ENCODE measurements at regions of chr6 and their contacts with region 1.

Region 1: GRCh38 chr6:109073344-109074132 is 21.1 kb downstream of the SESN1 start:
- DNase-seq: no peak
- ATAC-seq: peak; percentile 61; the same call in 2 of the 3 replicates
- H3K4me3 ChIP-seq: no peak overlapping the region
- H3K27ac ChIP-seq: no peak overlapping the region
- H3K4me1 ChIP-seq: no peaks in the 10 kb centered on the region
- H3K27me3 ChIP-seq: 0 out of 4 replicates have a peak, but pooled peaks cover 0 to 1% of the 10 kb centered on the region in 2 experiments
- CTCF ChIP-seq: peak; percentile 48 to 75 (median 60)
- EP300 ChIP-seq: no peak
- POLR2A ChIP-seq: no peak
- RAD21 ChIP-seq: peak; percentile 86

Region 2: GRCh38 chr6:108541838-108542759 is 531.4 kb before region 1 on chr6:
- CTCF ChIA-PET with region 1: interaction called, 107 read pairs
- POLR2A ChIA-PET with region 1: no interaction called
- RAD21 ChIA-PET with region 1: interaction called, 49 read pairs
- SMC1A ChIA-PET with region 1: interaction called, 61 read pairs
- in situ Hi-C with region 1: loop called (anchors 5 kb)
- intact Hi-C with region 1: loop called (anchors 1 kb)
- DNase-seq: no peak
- ATAC-seq: peak; percentile 85
- H3K4me3 ChIP-seq: no peak overlapping the region
- H3K27ac ChIP-seq: no peak overlapping the region
- H3K4me1 ChIP-seq: no peaks in the 10 kb centered on the region
- H3K27me3 ChIP-seq: peaks cover 0 to 1% of the 10 kb centered on the region in 2 experiments; a peak in 2 of 4 replicates
- CTCF ChIP-seq: peak; percentile 76 to 91 (median 80)
- EP300 ChIP-seq: no peak
- POLR2A ChIP-seq: no peak
- RAD21 ChIP-seq: peak; percentile 95

Region 3: DNA sequence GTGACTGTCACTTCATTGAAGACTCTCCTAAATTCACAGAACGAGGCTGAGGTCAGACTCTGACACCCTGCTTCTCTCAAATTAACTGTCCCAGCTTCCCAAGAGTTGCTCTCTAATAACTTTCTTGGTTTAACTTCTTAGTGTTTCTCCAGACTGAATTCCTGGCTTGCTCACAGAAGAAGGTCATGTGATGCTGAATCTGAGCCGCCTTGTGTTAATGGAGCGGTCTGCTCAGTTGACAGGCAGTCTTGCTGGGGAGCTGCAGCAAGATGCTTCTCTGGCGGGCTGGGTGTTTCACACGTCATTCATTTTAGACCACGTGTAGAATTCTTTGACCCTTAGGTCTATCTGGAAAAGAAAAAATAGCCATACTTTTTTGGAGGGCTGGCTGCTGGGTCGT is 405.5 kb before region 1 on chr6:
- CTCF ChIA-PET with region 1: no interaction called
- POLR2A ChIA-PET with region 1: no interaction called
- RAD21 ChIA-PET with region 1: no interaction called
- SMC1A ChIA-PET with region 1: no interaction called
- in situ Hi-C with region 1: no loop called
- intact Hi-C with region 1: no loop called
- DNase-seq: no peak
- ATAC-seq: no peak
- H3K4me3 ChIP-seq: no peak overlapping the region
- H3K27ac ChIP-seq: no peak overlapping the region
- H3K4me1 ChIP-seq: peaks cover 10% of the 10 kb centered on the region
- H3K27me3 ChIP-seq: no peaks in the 10 kb centered on the region
- CTCF ChIP-seq: no peak
- EP300 ChIP-seq: no peak
- POLR2A ChIP-seq: no peak
- RAD21 ChIP-seq: no peak

Region 4: GRCh38 chr6:108782179-108783041 is 291.1 kb before region 1 on chr6:
- CTCF ChIA-PET with region 1: interaction called, 9 read pairs
- POLR2A ChIA-PET with region 1: no interaction called
- RAD21 ChIA-PET with region 1: no interaction called
- SMC1A ChIA-PET with region 1: interaction called, 4 read pairs
- in situ Hi-C with region 1: no loop called
- intact Hi-C with region 1: loop called (anchors 2 kb)
- DNase-seq: no peak
- ATAC-seq: peak; percentile 98
- H3K4me3 ChIP-seq: peak overlapping the region; percentile 42; the same call in 1 of the 2 replicates
- H3K27ac ChIP-seq: no peak overlapping the region
- H3K4me1 ChIP-seq: no peaks in the 10 kb centered on the region
- H3K27me3 ChIP-seq: peaks cover 3 to 22% of the 10 kb centered on the region in 2 experiments; a peak in 3 of 4 replicates
- CTCF ChIP-seq: peak; percentile 81 to 93 (median 86)
- EP300 ChIP-seq: no peak
- POLR2A ChIP-seq: no peak
- RAD21 ChIP-seq: peak; percentile 78

Region 5: DNA sequence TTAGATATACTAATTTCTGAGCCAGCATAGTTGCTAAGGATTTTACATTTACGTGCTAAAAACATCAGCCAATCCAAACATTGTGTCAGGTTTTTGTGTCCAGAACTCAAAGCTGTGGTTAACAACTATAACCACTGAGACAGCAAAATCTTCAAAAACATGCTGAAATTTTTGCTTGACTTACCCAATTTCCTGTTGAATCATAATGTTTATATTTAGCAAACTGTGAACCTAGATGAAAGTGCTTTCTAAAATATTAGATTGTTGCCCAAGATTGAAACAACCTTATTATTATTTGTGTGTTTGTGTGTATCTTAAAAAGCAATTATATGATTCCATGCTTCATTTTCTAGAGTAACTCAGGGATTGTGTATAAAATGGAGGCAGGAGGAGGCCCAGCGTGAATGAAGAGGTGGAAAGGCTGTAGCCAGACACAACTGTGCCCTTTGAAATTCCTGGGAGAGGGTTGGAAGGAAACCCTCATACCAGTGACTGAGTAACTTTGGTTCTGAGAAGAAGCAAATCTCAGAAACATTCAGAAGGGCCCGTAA is 177.4 kb before region 1 on chr6:
- CTCF ChIA-PET with region 1: interaction called, 15 read pairs
- POLR2A ChIA-PET with region 1: no interaction called
- RAD21 ChIA-PET with region 1: interaction called, 4 read pairs
- SMC1A ChIA-PET with region 1: interaction called, 3 read pairs
- in situ Hi-C with region 1: no loop called
- intact Hi-C with region 1: no loop called
- DNase-seq: no peak
- ATAC-seq: no peak
- H3K4me3 ChIP-seq: no peak overlapping the region
- H3K27ac ChIP-seq: no peak overlapping the region
- H3K4me1 ChIP-seq: no peaks in the 10 kb centered on the region
- H3K27me3 ChIP-seq: peaks cover 3 to 4% of the 10 kb centered on the region in 2 experiments; a peak in 2 of 4 replicates
- CTCF ChIP-seq: no peak
- EP300 ChIP-seq: peak in 1 of 2 experiments; percentile 34; a peak in 1 of 4 replicates
- POLR2A ChIP-seq: no peak
- RAD21 ChIP-seq: no peak

Region 6: DNA sequence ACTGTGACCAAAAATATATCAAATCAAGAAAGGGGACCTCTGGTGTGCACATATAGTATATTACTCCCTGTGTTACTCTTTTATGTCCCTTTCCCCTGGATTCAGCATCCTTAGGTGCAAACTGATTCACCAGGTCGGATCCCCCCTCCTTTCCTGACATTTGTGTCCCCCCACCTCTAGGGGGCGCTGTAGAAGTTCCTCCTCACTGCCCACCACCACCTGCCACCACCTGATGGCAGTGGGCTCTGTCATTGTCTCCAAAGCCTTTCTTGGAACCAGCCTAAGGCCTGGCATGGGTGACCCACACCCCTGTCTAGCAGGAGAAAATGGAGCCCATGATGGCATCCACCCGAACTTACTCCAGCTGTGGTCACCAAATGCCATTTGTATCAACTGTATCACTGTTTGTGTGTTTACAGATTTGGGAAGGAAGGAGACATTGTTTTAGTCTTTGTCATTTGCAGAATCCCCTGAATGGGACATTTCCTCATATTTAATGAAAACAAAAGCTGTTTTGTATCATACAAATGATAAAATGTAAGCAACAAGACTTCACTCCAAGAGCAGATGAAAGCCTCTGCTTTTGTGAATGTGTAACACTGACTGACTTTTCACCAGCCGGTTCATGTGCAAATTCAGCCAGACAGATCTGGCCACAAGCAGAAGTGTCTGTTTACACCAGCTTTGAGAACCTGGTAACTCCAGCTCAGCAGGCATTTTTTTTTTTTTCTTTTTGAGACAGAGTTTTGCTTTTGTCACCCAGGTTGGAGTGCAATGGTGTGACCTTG is 159.1 kb before region 1 on chr6:
- CTCF ChIA-PET with region 1: interaction called, 73 read pairs
- POLR2A ChIA-PET with region 1: no interaction called
- RAD21 ChIA-PET with region 1: no interaction called
- SMC1A ChIA-PET with region 1: interaction called, 3 read pairs
- in situ Hi-C with region 1: no loop called
- intact Hi-C with region 1: loop called (anchors 5 kb)
- DNase-seq: no peak
- ATAC-seq: peak; percentile 65
- H3K4me3 ChIP-seq: no peak overlapping the region
- H3K27ac ChIP-seq: no peak overlapping the region
- H3K4me1 ChIP-seq: no peaks in the 10 kb centered on the region
- H3K27me3 ChIP-seq: no peaks in the 10 kb centered on the region; a peak in 2 of 4 replicates
- CTCF ChIP-seq: peak; percentile 59 to 65 (median 65)
- EP300 ChIP-seq: no peak
- POLR2A ChIP-seq: no peak
- RAD21 ChIP-seq: 0 out of 2 replicates have a peak, but pooled peaks have one; percentile 8

Region 7: GRCh38 chr6:109059571-109060021 is 13.9 kb before region 1 on chr6:
- CTCF ChIA-PET with region 1: interaction called, 13 read pairs
- POLR2A ChIA-PET with region 1: no interaction called
- RAD21 ChIA-PET with region 1: interaction called, 5 read pairs
- SMC1A ChIA-PET with region 1: interaction called, 12 read pairs
- in situ Hi-C with region 1: no loop called
- intact Hi-C with region 1: no loop called
- DNase-seq: no peak
- ATAC-seq: peak; percentile 84
- H3K4me3 ChIP-seq: no peak overlapping the region
- H3K27ac ChIP-seq: no peak overlapping the region
- H3K4me1 ChIP-seq: no peaks in the 10 kb centered on the region
- H3K27me3 ChIP-seq: no peaks in the 10 kb centered on the region; a peak in 2 of 4 replicates
- CTCF ChIP-seq: no peak
- EP300 ChIP-seq: no peak
- POLR2A ChIP-seq: no peak
- RAD21 ChIP-seq: no peak

Region 8: DNA sequence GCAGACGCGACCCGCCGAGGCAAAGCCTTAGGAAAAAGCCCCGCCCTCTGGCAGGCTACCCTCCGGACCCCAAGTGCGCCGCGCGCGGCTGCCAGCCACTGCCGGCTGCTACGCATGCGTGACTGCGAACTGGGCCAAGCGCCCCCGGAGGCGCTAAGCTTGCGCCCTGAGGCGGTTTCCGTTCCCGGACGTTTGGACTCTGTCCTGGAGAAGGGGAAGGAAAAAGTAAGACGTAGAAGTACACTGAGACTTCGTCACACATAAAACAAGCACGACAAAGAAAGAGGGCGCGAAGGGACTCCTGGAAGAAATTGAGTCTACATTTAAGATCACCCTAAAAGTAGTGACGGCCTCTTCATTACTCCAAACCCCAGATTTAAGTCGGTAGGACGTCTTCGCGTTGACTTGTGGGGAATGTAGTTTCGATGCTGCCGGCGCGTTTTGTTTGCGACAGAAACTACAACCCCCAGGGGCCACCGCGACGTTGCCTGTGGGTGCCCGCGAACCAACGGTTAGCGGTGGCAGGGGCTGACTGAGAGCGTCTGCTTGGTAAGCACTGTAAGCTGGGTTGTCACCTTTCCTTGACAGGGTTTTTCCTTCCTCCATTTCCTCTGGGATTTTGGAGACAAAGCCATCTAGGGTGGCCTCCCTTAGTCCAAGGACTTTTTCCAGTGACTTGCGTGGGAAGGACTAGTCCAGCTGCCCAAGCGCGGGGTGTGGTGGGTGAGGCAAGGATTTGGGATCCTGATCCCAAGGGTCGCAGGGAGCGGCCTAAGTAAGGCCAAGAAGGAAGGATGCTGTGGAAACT is 21.7 kb after region 1 on chr6 and contains the start of gene CEP57L1:
- CTCF ChIA-PET with region 1: interaction called, 38 read pairs
- POLR2A ChIA-PET with region 1: interaction called, 3 read pairs
- RAD21 ChIA-PET with region 1: interaction called, 4 read pairs
- SMC1A ChIA-PET with region 1: interaction called, 6 read pairs
- in situ Hi-C with region 1: no loop called
- intact Hi-C with region 1: no loop called
- DNase-seq: peak; percentile 88
- ATAC-seq: peak; percentile 81
- H3K4me3 ChIP-seq: peak within 1 kb of the TSS; percentile 90
- H3K27ac ChIP-seq: peak within 1 kb of the TSS; percentile 94
- H3K4me1 ChIP-seq: no peaks in the 10 kb centered on the region
- H3K27me3 ChIP-seq: no peaks in the 10 kb centered on the region
- CTCF ChIP-seq: peak; percentile 14 to 23 (median 14); a peak in 2 of 6 replicates
- EP300 ChIP-seq: no peak
- POLR2A ChIP-seq: peak; percentile 84
- RAD21 ChIP-seq: no peak
- polyA plus RNA-seq, gene CEP57L1: 22.6 to 24.0 TPM

Measured in GM12878 (cell line).